ENCODE measurements at regions of chr5 and their contacts with region 1.

Region 1: GRCh38 chr5:132180134-132180745 is 47.4 kb downstream of the P4HA2 start:
- DNase-seq: no peak
- H3K4me3 Mint-ChIP-seq: no peak overlapping the region
- H3K27ac Mint-ChIP-seq: peak overlapping the region; percentile 1
- H3K4me1 Mint-ChIP-seq: peaks cover 32% of the 10 kb centered on the region
- H3K27me3 Mint-ChIP-seq: no peaks in the 10 kb centered on the region

Region 2: GRCh38 chr5:132134384-132134783 is 45.9 kb before region 1 on chr5:
- CTCF ChIA-PET with region 1: interaction called, 3 read pairs
- POLR2A ChIA-PET with region 1: no interaction called
- intact Hi-C with region 1: loop called (anchors 5 kb)
- DNase-seq: no peak
- H3K4me3 Mint-ChIP-seq: no peak overlapping the region
- H3K27ac Mint-ChIP-seq: no peak overlapping the region
- H3K4me1 Mint-ChIP-seq: peaks cover 6% of the 10 kb centered on the region
- H3K27me3 Mint-ChIP-seq: peaks cover 9% of the 10 kb centered on the region

Region 3: DNA sequence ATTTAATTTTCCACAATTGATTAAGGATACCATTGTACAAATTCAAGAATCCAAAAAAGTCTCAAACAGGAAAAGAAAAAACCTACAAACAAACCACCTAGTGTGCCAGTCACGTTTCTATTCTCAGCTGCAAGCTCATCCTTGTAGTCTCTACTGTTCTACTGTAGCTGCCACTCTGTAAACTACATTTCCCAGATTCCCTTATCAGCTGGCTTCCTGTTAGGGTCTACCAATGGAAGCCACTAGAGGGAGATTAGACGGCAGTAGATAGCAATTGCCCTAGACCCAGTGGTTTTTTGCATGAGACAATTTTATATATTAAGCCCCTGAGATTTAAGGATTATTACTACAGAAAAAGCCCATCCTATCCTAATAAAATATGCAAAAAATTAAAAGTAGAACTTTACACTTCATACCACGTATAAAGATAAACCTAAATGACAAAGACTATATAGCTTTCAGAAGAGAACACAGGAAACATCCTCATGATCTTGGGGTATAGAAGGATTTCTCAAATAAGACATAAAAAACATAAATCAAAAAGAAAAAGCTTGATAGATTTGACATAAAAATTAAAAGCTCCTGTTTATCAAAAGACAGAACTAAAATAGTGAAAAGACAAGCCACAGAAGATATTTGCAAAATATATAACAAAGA is 10.0 kb after region 1 on chr5:
- CTCF ChIA-PET with region 1: interaction called, 27 read pairs
- POLR2A ChIA-PET with region 1: no interaction called
- intact Hi-C with region 1: no loop called
- DNase-seq: no peak
- H3K4me3 Mint-ChIP-seq: no peak overlapping the region
- H3K27ac Mint-ChIP-seq: no peak overlapping the region
- H3K4me1 Mint-ChIP-seq: peaks cover 7% of the 10 kb centered on the region
- H3K27me3 Mint-ChIP-seq: peaks cover 8% of the 10 kb centered on the region

Region 4: DNA sequence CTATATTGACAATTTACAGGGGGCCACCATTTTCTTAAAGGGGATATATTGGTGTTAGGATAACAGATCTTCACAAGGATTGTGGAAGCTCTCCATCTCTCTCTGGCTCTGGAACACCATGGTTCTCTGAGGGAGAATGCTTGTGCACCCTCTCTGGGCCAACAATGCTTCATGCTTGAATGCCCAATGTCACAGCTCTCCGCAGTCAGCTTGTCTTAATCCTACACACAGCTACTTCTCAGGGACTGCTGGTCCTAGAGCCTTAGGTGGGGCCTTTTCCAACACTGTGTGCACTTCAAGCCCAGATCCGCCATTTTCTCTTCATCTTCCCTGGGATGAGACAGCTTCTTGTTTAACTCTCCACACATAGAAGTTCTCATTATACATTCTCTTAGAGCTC is 70.3 kb after region 1 on chr5:
- CTCF ChIA-PET with region 1: no interaction called
- POLR2A ChIA-PET with region 1: no interaction called
- intact Hi-C with region 1: no loop called
- DNase-seq: no peak
- H3K4me3 Mint-ChIP-seq: no peak overlapping the region
- H3K27ac Mint-ChIP-seq: no peak overlapping the region
- H3K4me1 Mint-ChIP-seq: no peaks in the 10 kb centered on the region
- H3K27me3 Mint-ChIP-seq: no peaks in the 10 kb centered on the region

Region 5: DNA sequence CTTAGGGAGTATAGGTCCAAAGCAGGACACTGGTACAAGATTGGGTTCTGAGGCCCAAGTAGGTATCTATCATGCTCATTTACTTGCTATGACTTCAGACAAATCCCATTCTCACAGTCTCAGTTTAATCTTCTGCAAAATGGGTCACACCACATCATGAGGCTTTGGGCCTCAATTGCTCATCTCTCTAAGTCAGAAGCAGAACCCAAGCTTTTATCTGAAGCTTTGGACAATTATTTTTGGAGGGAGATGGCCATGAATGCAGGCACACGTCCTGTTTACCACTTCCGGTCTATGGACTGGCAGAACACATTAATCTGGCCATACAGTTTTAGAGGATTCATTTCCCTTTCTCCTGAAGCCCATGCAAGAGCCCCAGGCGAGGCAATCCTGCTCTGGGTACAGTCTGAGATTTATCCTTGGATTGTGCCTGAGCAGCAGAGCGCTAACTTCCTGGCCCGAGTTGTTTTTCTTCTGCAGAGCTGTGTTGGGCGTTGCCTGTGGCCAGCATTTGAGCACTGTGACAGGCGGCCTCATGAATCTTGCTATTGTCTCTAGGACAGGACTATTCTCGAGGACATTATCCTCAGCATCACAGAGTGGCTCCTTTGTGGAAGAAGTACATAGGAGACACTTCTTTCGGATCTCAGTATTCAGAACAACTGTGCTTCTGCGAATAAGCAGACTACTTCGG is 130.0 kb after region 1 on chr5:
- CTCF ChIA-PET with region 1: no interaction called
- POLR2A ChIA-PET with region 1: no interaction called
- intact Hi-C with region 1: no loop called
- DNase-seq: no peak
- H3K4me3 Mint-ChIP-seq: no peak overlapping the region
- H3K27ac Mint-ChIP-seq: no peak overlapping the region
- H3K4me1 Mint-ChIP-seq: no peaks in the 10 kb centered on the region
- H3K27me3 Mint-ChIP-seq: no peaks in the 10 kb centered on the region

Region 6: DNA sequence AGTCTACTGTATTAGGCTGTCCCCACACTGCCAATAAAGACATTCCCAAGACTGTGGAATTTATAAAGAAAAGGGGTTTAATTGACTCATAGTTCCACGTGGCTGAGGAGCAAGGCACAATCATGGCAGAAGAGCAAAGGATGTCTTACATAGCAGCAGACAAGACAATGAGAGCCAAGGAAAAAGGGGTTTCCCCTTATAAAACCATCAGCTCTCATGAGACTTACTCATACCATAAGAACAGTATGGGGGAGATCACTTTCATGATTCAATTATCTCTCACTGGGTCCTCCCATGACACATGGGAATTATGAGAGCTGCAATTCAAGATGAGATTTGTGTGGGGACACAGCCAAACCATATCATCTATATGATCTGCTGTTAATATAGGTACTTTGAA is 1446.9 kb after region 1 on chr5:
- CTCF ChIA-PET with region 1: no interaction called
- POLR2A ChIA-PET with region 1: no interaction called
- intact Hi-C with region 1: no loop called
- DNase-seq: no peak
- H3K4me3 Mint-ChIP-seq: no peak overlapping the region
- H3K27ac Mint-ChIP-seq: no peak overlapping the region
- H3K4me1 Mint-ChIP-seq: peaks cover 2% of the 10 kb centered on the region
- H3K27me3 Mint-ChIP-seq: peaks cover 46% of the 10 kb centered on the region

Measured in activated CD4-positive, alpha-beta memory T cell treated with anti-CD3 and anti-CD28 coated beads for 36 hours (primary cell).